Psoas muscle (tissue), 8 donors: ENCODE measurements at regions of chr5 and their contacts with region 1.

Region 1: DNA sequence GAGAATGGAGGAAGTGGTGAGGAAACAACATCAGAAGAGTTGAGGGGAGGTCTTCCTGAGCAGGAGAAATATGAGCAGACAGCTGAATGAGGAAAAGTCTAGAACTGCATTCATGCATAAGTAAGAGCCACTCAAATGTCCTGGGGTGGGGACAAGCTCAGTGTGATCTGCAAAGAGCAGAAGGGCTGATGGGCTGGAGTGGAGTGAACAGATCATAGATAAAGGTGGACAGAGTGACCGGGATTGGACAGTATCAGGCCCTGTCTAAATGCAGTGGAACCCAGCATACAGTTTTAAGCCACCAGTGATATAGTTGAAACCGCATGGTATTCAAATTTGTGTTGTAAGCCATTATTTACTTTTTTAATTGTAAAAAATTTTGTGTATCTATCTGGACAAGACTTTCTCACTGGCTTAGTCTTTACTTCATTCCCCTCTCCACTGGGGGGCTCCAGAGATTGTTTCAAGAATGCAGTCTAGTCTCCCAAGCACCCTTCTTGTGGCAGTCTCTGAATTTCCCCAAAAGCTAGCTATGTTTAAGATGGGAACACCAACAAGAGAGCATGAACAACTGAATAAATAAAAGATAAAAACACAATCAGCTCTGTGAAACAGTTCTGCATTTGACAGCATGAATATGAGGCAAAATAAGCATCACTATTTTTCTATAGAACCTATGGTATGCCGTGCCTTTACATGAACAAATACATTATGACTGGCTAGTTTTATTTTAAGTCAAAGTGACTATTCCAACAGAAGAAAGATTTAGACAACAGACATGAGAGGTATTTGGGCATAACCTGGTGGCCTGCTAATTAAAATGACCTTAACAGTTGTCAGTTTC is 10.7 kb upstream of the STK32A start:
- DNase-seq: no peak
- ATAC-seq: peak in 3 of 4 donors; percentile 46 to 77 (median 73)
- H3K4me3 ChIP-seq: no peak overlapping the region
- H3K27ac ChIP-seq: no peak overlapping the region
- H3K4me1 ChIP-seq: no peaks in the 10 kb centered on the region
- H3K27me3 ChIP-seq: no peaks in the 10 kb centered on the region
- CTCF ChIP-seq: peak; percentile 61

Region 2: DNA sequence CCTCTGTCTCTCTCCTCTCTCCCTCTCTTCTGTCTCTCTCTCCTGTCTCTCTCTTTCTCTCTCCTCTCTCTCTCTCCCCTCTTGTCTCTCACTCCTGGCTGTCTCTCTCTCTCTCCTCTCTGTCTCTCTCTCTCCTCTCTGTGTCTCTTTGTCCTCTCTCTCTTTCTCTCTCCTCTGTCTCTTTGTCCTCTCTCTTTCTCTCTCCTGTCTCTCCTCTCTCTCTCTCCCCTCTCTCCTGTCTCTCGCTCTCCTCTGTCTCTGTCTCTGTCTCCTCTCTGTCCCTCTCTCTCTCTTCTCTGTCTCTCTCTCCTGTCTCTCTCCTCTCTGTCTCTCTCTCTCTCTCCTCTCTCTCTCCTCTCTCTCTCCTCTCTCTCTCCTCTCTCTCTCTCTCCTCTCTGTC is 35.7 kb after region 1 on chr5:
- intact Hi-C with region 1: no loop called
- DNase-seq: no peak
- ATAC-seq: no peak
- H3K4me3 ChIP-seq: no peak overlapping the region
- H3K27ac ChIP-seq: no peak overlapping the region
- H3K4me1 ChIP-seq: no peaks in the 10 kb centered on the region
- H3K27me3 ChIP-seq: no peaks in the 10 kb centered on the region
- CTCF ChIP-seq: no peak

Region 3: GRCh38 chr5:147346006-147346561 is 121.9 kb after region 1 on chr5:
- intact Hi-C with region 1: no loop called
- DNase-seq: no peak
- ATAC-seq: no peak
- H3K4me3 ChIP-seq: no peak overlapping the region
- H3K27ac ChIP-seq: no peak overlapping the region
- H3K4me1 ChIP-seq: no peaks in the 10 kb centered on the region
- H3K27me3 ChIP-seq: no peaks in the 10 kb centered on the region
- CTCF ChIP-seq: no peak

Region 4: GRCh38 chr5:147369742-147370374 is 145.7 kb after region 1 on chr5:
- intact Hi-C with region 1: loop called (anchors 5 to 10 kb)
- DNase-seq: no peak
- ATAC-seq: no peak
- H3K4me3 ChIP-seq: no peak overlapping the region
- H3K27ac ChIP-seq: no peak overlapping the region
- H3K4me1 ChIP-seq: no peaks in the 10 kb centered on the region
- H3K27me3 ChIP-seq: no peaks in the 10 kb centered on the region
- CTCF ChIP-seq: peak; percentile 52

Region 5: GRCh38 chr5:147483961-147484707 is 260.0 kb after region 1 on chr5:
- intact Hi-C with region 1: no loop called
- DNase-seq: peak; percentile 82 to 87
- ATAC-seq: peak; percentile 39 to 81 (median 66)
- H3K4me3 ChIP-seq: no peak overlapping the region
- H3K27ac ChIP-seq: peak overlapping the region; percentile 55
- H3K4me1 ChIP-seq: no peaks in the 10 kb centered on the region
- H3K27me3 ChIP-seq: no peaks in the 10 kb centered on the region
- CTCF ChIP-seq: no peak

Region 6: GRCh38 chr5:147576646-147577535 is 352.7 kb after region 1 on chr5:
- intact Hi-C with region 1: loop called in 1 of 2 experiments (anchors 5 kb)
- DNase-seq: peak; percentile 58 to 78
- ATAC-seq: peak in 2 of 4 donors; percentile 63 to 70
- H3K4me3 ChIP-seq: no peak overlapping the region
- H3K27ac ChIP-seq: no peak overlapping the region
- H3K4me1 ChIP-seq: no peaks in the 10 kb centered on the region
- H3K27me3 ChIP-seq: no peaks in the 10 kb centered on the region
- CTCF ChIP-seq: peak; percentile 79